AG04449 (cell line): ENCODE measurements at regions of chr10 and their contacts with region 1.

Region 1: DNA sequence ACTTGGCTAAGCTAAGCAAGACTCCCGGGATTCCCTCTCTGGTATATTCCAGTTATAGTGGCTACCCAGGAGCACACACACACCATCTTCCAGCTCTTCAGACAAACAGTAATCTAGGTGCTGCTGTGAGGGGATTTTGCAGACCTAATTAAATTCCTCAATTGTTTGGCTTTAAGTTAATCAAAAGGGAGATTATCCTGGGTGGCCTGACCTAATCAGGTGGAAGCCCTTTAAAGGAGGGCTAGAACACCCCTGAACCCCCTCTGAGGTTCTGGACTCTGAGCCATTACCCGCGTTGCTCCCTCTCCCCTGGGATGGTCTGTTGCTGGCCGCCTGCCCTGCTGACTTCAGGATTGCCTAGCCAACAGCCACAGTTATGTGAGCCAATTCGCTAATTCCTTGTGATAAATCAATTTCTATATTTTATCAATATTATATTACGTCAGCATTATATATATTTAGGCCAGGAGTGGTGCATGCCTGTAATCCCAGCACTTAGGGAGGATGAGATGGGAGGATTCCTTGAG is 6.4 kb downstream of the SFXN2 start:
- DNase-seq: no peak
- H3K4me3 ChIP-seq: no peak overlapping the region
- CTCF ChIP-seq: no peak

Region 2: GRCh38 chr10:102735065-102735562 is 14.3 kb after region 1 on chr10:
- CTCF ChIA-PET with region 1: interaction called, 12 read pairs
- POLR2A ChIA-PET with region 1: interaction called, 3 read pairs
- DNase-seq: no peak
- H3K4me3 ChIP-seq: no peak overlapping the region
- CTCF ChIP-seq: no peak